ENCODE measurements at regions of chr17 and their contacts with region 1.

Region 1: DNA sequence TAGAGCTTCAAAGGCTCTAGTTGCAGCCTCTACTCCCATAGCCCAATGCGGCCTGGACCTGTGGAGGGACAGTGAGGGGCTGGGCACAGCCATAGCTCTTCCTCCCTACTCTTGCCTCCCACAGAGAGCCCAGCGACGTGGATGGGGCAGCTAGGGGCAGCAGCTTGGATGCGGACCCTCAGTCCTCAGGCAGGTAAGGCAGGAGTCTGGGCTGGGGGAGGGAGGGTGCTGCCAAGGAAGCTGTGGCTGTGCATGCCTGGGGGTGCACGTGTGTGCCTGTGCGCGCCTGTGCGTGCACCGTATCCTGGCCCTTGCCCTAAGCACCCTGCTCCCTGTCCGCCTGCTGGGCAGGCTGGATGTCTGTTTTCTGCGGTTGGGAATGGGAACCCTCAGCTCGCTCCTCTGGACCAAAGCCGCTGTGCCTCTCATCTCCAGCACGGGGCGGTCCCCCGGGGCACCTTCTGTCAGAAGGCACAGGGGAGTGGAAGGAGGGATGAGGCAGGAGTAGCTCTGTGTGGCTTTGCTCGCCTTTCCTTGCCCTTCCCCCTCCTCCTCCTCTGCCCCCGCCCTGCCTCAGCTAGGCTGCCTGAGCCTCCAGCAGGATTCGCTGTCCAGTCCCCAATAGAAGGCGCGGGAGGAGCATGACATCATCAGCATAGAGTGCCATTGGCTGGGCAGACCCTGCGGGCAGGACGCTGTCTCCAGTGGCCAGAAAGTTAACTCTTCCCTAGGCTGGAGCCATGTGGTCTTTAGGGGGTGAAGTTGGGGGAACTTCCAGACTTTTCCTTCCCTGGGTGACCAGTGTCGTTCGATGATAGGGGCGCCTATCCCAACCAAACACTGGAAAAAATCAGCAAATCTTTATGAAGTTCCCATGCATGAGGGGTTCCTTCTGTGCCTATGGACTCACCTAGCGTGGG is 797 bp downstream of the PRCD start:
- ATAC-seq: peak; percentile 76 to 98 (median 82)
- H3K4me3 ChIP-seq: peak overlapping the region; percentile 11 to 23 (median 21)
- H3K27ac ChIP-seq: peak overlapping the region; percentile 68 to 74
- H3K4me1 ChIP-seq: peaks cover 47 to 52% of the 10 kb centered on the region in 2 donors

Region 2: GRCh38 chr17:76658001-76658662 is 117.5 kb after region 1 on chr17:
- in situ Hi-C with region 1: no loop called
- ATAC-seq: no peak
- H3K4me3 ChIP-seq: no peak overlapping the region
- H3K27ac ChIP-seq: no peak overlapping the region
- H3K4me1 ChIP-seq: peaks cover 17 to 23% of the 10 kb centered on the region in 2 donors

Region 3: DNA sequence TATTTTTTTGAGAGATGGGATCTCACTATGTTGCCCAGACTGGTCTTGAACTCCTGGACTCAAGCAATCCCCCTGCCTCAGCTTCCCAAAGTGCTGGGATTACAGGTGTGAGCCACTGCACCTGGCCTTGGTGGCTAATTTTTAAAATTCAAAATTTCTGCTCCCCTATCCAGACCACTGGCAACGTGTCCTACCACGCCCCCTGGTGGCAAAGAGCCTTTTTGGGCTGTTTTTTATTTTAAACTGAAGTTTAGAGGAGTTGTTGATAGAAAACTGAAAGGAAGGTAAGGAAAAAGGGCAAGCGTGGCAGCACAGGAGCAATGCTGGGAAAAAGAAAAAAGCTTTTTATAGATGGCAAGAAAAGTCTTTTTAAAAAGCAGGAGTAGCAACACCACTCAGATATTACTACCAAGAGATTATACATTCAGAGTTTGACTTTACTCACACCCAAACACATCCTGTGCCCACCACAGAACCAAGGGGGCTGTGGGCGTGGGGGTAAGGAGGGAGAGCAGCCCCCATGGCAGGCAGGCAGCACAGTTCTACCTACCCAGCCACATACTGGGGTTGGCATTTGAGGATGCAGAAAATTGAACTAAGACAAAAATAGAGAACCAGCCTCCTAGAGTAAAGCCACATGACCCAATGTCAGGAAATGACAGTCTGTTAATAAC is 174.3 kb after region 1 on chr17:
- in situ Hi-C with region 1: loop called in 2 of 9 experiments (anchors 25 kb)
- ATAC-seq: no peak
- H3K4me3 ChIP-seq: no peak overlapping the region
- H3K27ac ChIP-seq: no peak overlapping the region
- H3K4me1 ChIP-seq: peaks cover 8 to 10% of the 10 kb centered on the region in 2 donors